Prostate gland (tissue), 2 donors: ENCODE measurements at regions of chr6 and their contacts with region 1.

Region 1: DNA sequence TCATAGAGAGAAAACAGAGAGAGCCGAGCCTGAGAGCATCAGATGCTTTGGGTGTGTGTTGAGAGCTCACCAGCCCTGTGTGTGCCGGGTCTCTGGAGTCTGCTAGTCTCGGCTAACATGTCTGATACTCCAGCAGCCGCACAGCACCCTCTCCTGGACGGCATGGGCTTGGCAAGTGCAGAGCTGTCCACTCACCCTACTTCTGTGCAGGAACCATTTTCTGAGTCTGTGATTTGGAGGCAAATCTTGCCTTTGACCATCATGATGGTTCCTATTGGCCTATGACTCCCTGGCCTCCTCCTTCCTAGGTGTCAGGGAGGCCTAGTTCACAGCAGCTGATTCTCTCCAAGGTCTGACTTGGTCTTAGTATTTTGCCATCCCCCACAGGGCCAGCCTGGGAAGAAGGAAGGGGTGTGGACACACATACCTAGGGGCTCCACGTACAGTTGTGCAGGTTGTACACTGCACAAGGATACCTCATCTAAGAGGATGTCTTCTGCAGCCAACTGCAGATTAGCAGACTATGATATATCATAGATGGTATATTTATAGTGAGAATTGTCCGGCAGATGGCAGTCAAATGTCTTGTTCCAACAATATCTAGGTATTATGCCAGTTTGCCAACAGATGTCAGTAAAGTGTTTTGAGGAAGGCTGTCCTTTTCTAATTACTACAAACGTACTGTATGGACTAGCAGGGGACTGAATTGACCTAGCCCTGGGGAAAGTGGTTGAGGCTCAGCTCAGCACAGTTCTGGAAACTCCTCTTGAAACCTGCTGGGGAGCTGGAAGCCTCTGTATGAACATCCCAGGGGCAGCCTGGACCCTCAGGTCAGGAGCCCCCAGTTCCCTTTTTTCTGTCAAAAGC is 13.0 kb downstream of the FGD2 start:
- DNase-seq: peak; percentile 90
- H3K4me3 ChIP-seq: no peak overlapping the region
- H3K27ac ChIP-seq: peak overlapping the region; percentile 42 to 58
- H3K4me1 ChIP-seq: peaks cover 3% of the 10 kb centered on the region
- H3K27me3 ChIP-seq: no peaks in the 10 kb centered on the region
- CTCF ChIP-seq: peak; percentile 41 to 93 (median 80)
- POLR2A ChIP-seq: peak; percentile 7

Region 2: DNA sequence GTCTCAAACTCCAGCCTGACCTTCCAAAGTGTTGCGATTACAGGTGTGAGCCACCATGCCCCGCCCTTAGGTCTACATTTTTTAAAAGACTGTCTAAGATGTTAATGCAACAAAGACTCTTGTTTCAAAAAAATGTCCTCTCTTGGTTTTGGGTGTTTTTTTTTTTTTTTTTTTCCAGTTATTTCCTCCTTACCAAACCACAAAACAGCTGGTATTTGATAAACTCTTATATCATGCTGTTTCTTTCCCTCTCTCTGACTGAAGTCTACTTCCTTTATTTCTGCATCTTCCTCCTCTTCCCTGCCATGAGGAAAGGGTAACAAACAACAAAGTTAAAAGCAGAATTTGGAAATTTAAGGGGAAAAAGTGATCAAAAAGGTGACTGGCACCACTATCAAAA is 492.4 kb before region 1 on chr6:
- intact Hi-C with region 1: no loop called
- DNase-seq: no peak
- H3K4me3 ChIP-seq: no peak overlapping the region
- H3K27ac ChIP-seq: no peak overlapping the region
- H3K4me1 ChIP-seq: no peaks in the 10 kb centered on the region
- H3K27me3 ChIP-seq: no peaks in the 10 kb centered on the region
- CTCF ChIP-seq: no peak
- POLR2A ChIP-seq: no peak

Region 3: GRCh38 chr6:36885461-36886401 is 132.7 kb before region 1 on chr6 and contains the start of gene C6orf89:
- intact Hi-C with region 1: loop called (anchors 10 kb)
- DNase-seq: peak; percentile 97
- H3K4me3 ChIP-seq: peak within 1 kb of the TSS; percentile 64 to 69
- H3K27ac ChIP-seq: peak within 1 kb of the TSS; percentile 72 to 76
- H3K4me1 ChIP-seq: peaks cover 5% of the 10 kb centered on the region
- H3K27me3 ChIP-seq: no peaks in the 10 kb centered on the region
- CTCF ChIP-seq: peak; percentile 84 to 98 (median 96)
- POLR2A ChIP-seq: peak; percentile 53
- total RNA-seq, gene C6orf89: 54.9 to 96.9 TPM

Region 4: GRCh38 chr6:36985808-36986703 is 32.4 kb before region 1 on chr6 and contains the start of gene MTCH1:
- intact Hi-C with region 1: loop called (anchors 2 kb)
- DNase-seq: peak; percentile 85
- H3K4me3 ChIP-seq: peak within 1 kb of the TSS; percentile 99 to 100
- H3K27ac ChIP-seq: peak within 1 kb of the TSS; percentile 97 to 98
- H3K4me1 ChIP-seq: peaks cover 4% of the 10 kb centered on the region
- H3K27me3 ChIP-seq: no peaks in the 10 kb centered on the region
- CTCF ChIP-seq: peak in 1 of 4 experiments; percentile 3
- POLR2A ChIP-seq: peak; percentile 99
- total RNA-seq, gene MTCH1: 269 to 367 TPM

Region 5: GRCh38 chr6:37257634-37258404 is 239.4 kb after region 1 on chr6 and contains the starts of genes TBC1D22B and TMEM217:
- intact Hi-C with region 1: no loop called
- DNase-seq: peak; percentile 98
- H3K4me3 ChIP-seq: peak within 1 kb of the TSS; percentile 90 to 97
- H3K27ac ChIP-seq: peak within 1 kb of the TSS; percentile 85 to 86
- H3K4me1 ChIP-seq: no peaks in the 10 kb centered on the region
- H3K27me3 ChIP-seq: no peaks in the 10 kb centered on the region
- CTCF ChIP-seq: no peak
- POLR2A ChIP-seq: peak; percentile 92
- total RNA-seq, gene TBC1D22B: 10.7 to 27.0 TPM
- total RNA-seq, gene TMEM217: 0.50 to 7.3 TPM